Colonic mucosa (tissue), 4 donors: ENCODE measurements at regions of chr17 and their contacts with region 1.

Region 1: DNA sequence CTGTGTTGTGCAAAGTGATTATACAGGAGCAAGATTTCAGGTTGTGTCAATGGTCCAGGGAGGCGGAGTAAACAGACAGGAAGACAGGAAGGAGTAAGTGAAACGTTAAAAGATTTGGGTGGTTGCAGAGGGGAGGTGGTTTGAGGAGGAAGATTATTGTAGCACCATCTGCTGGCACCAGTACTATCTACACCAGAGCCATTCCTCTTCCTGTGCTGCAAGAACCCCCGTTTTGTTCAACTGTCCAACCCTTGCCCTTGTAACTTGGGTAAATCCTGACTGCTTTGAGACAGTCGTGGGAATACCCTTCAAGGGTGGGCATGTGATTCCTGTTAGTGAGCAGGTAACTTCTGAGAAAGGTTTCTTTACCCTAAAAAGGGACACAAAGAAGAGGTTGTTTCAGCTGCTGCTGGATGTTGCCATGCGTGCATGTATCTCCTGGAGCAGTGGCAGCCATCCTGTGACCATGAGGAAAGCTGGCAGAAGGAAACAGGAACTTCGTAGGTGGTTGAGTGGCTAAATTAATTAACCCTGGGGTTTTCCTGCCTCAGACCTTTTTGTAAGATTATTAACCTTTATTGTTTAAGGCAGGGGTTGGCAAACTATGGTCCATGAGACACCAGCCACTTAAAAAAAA is 124.1 kb downstream of the PRKCA start:
- DNase-seq: peak; percentile 48
- H3K4me3 ChIP-seq: no peak overlapping the region
- H3K27ac ChIP-seq: no peak overlapping the region
- H3K4me1 ChIP-seq: no peaks in the 10 kb centered on the region
- H3K27me3 ChIP-seq: no peaks in the 10 kb centered on the region
- CTCF ChIP-seq: peak; percentile 36

Region 2: GRCh38 chr17:66016231-66016630 is 410.3 kb before region 1 on chr17:
- intact Hi-C with region 1: no loop called
- DNase-seq: no peak
- H3K4me3 ChIP-seq: no peak overlapping the region
- H3K27ac ChIP-seq: no peak overlapping the region
- H3K4me1 ChIP-seq: no peaks in the 10 kb centered on the region
- H3K27me3 ChIP-seq: no peaks in the 10 kb centered on the region
- CTCF ChIP-seq: no peak

Region 3: DNA sequence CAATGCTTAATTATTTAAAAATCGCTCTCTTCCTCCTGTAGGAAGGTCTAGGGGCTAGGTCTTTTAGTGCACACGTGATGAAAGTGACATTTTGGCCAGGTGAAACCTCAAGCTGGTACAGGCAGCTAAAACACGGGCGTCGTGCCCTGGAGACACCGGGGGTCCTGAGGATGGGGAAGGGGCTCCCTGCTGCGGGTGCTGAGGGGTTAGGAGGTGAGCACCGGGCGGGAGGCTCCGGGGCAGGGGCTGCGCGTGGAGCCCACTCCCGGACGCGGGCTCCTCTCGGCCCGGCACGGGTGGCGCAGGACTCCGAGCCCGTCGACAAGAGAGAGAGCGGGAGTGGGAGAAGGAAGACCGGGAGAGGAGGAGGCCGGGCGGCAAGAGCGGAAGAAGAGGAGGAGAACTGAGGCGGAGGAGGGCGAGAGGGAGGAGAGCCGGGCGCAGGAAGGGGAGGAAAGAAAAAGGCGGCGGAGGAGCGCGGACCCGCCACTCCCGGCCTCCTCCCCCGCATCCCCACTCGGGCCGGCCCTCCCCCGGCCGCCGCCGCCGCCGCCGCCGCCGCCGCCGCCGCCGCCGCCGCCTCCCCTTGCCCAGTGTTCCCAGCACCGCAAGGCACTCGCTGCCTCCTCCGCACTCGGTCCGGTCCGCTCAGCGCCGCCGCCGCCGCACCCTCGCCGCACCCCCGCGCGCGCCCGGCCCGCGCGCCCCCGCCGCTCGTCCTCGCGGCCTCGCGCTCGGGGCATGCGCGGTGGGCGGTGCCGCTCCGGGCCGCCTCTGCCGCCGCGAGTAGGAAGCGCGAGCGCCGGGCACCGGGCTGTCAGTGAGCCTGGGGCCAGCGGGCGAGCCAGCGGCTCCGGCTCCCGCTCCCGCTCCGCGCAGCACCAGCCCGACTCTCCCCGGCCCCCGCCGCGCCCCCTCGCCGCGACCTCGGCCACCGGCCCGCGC is 124.4 kb before region 1 on chr17 and contains the start of gene PRKCA:
- intact Hi-C with region 1: loop called (anchors 10 kb)
- DNase-seq: peak; percentile 75
- H3K4me3 ChIP-seq: peak within 1 kb of the TSS; percentile 83
- H3K27ac ChIP-seq: peak within 1 kb of the TSS; percentile 76
- H3K4me1 ChIP-seq: no peaks in the 10 kb centered on the region
- H3K27me3 ChIP-seq: no peaks in the 10 kb centered on the region
- CTCF ChIP-seq: no peak
- total RNA-seq, gene PRKCA: 40.0 to 41.8 TPM